ENCODE measurements at regions of chr2 and their contacts with region 1.

Region 1: GRCh38 chr2:219543601-219544358 is at the starts of genes CHPF and TMEM198:
- DNase-seq: peak; percentile 97
- ATAC-seq: peak; percentile 76
- H3K4me3 Mint-ChIP-seq: peak within 1 kb of the TSS; percentile 84
- H3K27ac Mint-ChIP-seq: peak within 1 kb of the TSS; percentile 81
- H3K4me1 Mint-ChIP-seq: peaks cover 20% of the 10 kb centered on the region
- H3K27me3 Mint-ChIP-seq: peaks cover 17% of the 10 kb centered on the region
- total RNA-seq, gene CHPF: 14.2 to 24.4 TPM
- total RNA-seq, gene TMEM198: 1.8 to 2.8 TPM

Region 2: DNA sequence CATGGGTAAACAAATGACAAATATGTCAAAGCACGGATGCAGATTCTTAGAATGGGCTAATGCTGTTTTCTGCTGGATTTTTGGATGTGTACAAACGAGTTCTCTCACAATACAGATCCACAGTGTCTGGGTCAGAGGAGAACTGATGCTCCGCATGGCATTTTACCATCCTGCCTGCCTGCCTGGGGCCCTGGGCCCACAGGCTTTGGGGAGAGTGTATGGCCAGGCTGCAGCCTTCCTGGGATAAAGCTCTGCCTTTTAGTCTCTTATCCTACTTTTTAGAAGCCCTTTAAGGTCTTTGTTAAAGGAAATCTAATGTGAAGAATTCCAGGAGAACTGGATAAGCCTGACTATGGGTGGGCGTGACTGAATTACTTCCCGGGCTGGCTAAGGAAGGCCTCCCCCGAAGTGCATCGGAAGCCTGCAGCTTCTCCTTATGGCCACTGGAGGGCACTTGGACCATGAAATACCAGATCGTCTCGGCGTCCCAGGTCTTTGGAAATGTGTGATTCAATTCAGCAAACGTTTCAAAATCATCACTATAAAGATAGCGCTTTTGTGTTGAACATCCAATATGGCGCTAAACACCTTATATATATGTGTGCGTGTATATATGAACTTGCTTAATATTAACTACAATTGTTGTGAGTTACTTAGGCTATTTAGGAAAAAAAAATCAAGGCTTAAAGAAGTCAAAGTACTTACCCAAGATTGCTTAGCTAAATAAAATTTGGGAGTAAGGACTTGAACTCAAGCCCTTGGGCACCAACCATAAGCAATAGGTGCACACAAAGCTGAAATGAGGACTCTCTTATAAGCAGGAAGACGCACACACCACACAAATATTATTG is 140.9 kb before region 1 on chr2:
- CTCF ChIA-PET with region 1: interaction called, 15 read pairs
- DNase-seq: peak; percentile 71
- ATAC-seq: peak; percentile 91
- H3K4me3 Mint-ChIP-seq: no peak overlapping the region
- H3K27ac Mint-ChIP-seq: no peak overlapping the region
- H3K4me1 Mint-ChIP-seq: no peaks in the 10 kb centered on the region
- H3K27me3 Mint-ChIP-seq: peaks cover 14% of the 10 kb centered on the region

Region 3: DNA sequence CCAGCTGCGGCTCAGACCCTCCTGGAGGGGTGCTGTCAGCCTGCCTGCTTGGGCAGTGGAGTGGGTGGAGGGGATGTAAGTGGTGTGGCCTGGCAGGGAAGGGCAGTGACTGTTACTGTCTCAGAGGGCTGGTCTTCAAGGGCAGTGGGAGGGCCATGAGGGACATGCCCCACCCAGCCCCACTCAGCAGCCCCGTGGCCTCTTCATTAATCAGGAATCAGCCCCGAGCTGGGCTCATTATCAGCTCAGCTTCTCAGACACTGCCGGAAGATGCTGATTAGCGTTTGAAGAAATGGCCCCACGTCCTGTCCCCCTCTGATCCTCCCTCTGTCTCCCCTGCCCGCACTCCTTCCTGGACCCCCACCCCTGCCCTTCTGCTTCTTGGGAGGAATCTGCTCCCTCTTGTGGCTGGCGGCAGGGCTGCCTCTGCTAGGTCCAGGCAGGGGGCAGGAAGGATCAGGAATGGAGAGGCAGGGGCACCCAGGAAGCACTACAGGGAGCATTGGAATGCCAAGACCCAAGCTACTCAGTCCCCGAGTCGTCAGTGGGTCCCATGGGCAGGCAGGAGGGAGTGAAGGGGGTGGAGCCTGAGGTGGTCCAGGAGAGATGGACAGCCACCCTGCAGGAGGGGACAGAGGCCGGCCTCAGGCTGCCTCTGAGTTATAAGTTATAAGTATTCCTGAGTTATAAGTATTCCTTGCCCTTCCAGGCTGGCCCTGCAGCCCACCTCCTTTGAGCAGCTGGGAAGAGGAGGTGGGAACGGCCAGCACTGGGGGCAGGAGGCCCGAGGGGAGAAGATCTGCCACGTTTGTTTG is 22.5 kb before region 1 on chr2:
- CTCF ChIA-PET with region 1: interaction called, 85 read pairs
- DNase-seq: no peak
- ATAC-seq: peak; percentile 23
- H3K4me3 Mint-ChIP-seq: no peak overlapping the region
- H3K27ac Mint-ChIP-seq: no peak overlapping the region
- H3K4me1 Mint-ChIP-seq: peaks cover 4% of the 10 kb centered on the region
- H3K27me3 Mint-ChIP-seq: peaks cover 71% of the 10 kb centered on the region

Region 4: GRCh38 chr2:219560037-219560892 is 16.5 kb after region 1 on chr2:
- CTCF ChIA-PET with region 1: interaction called, 60 read pairs
- DNase-seq: no peak
- ATAC-seq: peak; percentile 49
- H3K4me3 Mint-ChIP-seq: no peak overlapping the region
- H3K27ac Mint-ChIP-seq: no peak overlapping the region
- H3K4me1 Mint-ChIP-seq: no peaks in the 10 kb centered on the region
- H3K27me3 Mint-ChIP-seq: peaks cover 6% of the 10 kb centered on the region

Region 5: DNA sequence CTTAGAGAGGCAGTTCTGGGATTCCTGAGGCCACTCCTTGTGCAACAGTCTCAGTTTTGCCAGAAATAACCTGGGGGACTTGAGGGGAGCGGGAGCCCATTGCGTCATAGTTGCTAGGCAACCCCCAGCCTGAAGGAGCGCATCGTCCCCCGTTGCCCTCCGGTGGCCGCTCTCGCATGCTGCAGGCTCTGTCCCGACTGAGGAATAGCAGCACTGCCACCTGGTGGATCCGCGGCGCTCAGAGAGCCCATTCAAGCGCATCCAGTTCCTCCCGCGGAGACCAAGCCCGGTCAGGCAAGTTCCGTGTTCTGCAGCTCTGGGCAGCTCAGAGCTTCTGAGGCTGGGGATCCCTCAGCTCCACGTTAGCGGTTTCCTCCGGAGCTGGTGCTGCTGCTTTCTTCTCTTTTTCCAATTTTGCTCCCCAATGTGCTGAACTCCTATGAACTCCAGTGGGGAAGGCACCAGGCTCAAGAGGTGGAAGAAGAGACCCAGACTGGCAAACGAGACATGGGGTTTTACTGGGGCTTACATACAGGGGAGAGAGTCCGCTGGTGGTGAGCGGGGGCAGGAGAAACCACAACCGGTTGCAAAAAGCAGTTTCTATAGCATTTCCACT is 98.8 kb after region 1 on chr2:
- CTCF ChIA-PET with region 1: interaction called, 89 read pairs
- DNase-seq: peak; percentile 95
- ATAC-seq: peak; percentile 99
- H3K4me3 Mint-ChIP-seq: no peak overlapping the region
- H3K27ac Mint-ChIP-seq: no peak overlapping the region
- H3K4me1 Mint-ChIP-seq: peaks cover 17% of the 10 kb centered on the region
- H3K27me3 Mint-ChIP-seq: peaks cover 3% of the 10 kb centered on the region

Region 6: GRCh38 chr2:220143336-220143735 is 599.6 kb after region 1 on chr2:
- CTCF ChIA-PET with region 1: no interaction called
- DNase-seq: no peak
- ATAC-seq: no peak
- H3K4me3 Mint-ChIP-seq: no peak overlapping the region
- H3K27ac Mint-ChIP-seq: no peak overlapping the region
- H3K4me1 Mint-ChIP-seq: no peaks in the 10 kb centered on the region
- H3K27me3 Mint-ChIP-seq: no peaks in the 10 kb centered on the region

Measured in activated CD8-positive, alpha-beta memory T cell treated with anti-CD3 and anti-CD28 coated beads, Interleukin-2, amount 10 ng/mL, durations not matched to agents 7 days and 5 days (primary cell).